ENCODE measurements at regions of chr10 and their contacts with region 1.

Region 1: DNA sequence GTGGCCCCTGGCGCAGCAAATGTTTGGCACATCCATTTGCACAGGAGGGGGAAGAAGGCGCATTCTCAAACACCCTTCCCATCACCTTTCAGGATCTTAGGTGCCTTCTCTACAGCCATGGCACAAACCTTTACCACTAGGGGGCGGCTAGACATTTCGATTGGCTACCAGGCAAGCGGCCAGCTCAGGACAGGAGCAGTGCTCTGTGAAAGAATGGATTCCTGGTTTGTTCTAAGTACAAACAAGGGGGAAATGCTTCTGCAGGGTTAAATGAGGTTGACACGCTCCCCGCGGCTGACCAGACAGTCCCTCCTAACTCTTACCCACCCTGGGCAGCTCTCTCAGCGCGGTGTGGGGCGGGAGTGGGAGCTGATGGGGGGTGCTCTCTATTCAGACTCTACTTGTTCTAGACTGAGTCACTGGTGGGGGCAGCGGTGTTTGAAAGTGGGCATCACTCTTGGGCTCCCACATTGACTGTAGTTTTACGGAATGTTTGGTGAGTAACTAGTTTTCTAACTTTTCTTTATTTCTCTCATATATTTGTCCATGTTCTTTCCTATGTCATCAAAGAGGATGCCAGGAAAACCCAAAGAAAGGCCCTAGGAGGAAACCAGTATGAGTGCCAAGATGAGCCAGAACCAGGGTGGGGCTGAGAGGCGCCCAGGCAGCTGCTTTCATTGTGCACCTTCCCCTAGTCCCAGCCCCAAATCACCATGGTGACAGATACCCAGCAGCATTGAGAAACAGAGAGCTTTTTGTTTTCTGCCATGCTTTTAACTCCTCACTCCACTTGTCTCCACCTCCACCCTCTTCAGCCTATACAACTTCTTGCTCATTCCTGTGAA is 61.4 kb upstream of the GPR158 start:
- DNase-seq: peak; percentile 53 to 94 (median 74)
- ATAC-seq: peak; percentile 92
- H3K4me3 ChIP-seq: no peak overlapping the region
- H3K4me1 ChIP-seq: peaks cover 4% of the 10 kb centered on the region
- CTCF ChIP-seq: peak; percentile 56

Region 2: GRCh38 chr10:23968301-23968700 is 1145.1 kb before region 1 on chr10:
- intact Hi-C with region 1: no loop called
- DNase-seq: no peak
- ATAC-seq: no peak
- H3K4me3 ChIP-seq: no peak overlapping the region
- H3K4me1 ChIP-seq: no peaks in the 10 kb centered on the region
- CTCF ChIP-seq: no peak

Region 3: DNA sequence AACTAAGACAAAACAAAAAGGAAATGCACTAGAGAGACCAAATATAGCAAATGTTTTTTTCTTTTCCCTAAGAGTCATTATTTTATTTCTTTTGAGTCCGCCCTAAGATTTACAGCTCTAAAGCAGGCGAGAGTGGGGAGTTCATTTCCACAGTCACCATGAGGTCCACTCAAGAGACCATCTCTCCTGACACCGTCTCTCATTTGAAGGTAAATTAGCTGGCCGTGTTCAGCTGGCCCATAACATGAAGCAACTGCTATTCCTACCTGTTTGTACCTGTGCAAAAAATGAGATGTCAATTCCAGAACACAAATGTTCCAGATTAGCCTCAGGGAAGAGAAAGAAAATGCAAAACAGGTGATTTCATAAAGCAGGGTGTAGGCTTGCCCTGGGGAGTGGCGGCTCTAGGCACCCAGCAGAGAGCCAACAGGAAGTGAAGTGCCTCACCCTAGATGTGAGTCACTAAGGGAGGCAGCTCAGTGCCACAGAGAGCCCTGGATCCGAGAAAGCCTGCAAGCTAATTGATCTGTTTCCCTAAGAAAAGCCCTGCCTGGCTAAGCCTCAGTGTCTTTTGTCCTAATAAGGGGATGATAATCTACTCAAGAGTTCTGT is 629.8 kb before region 1 on chr10:
- intact Hi-C with region 1: no loop called
- DNase-seq: peak; percentile 78 to 82 (median 79)
- ATAC-seq: peak; percentile 97
- H3K4me3 ChIP-seq: no peak overlapping the region
- H3K4me1 ChIP-seq: peaks cover 25% of the 10 kb centered on the region
- CTCF ChIP-seq: no peak

Region 4: GRCh38 chr10:25226775-25227682 is 113.6 kb after region 1 on chr10:
- intact Hi-C with region 1: loop called in 1 of 2 experiments (anchors 10 kb)
- DNase-seq: peak in 2 of 3 donors; percentile 39 to 40
- ATAC-seq: peak; percentile 63
- H3K4me3 ChIP-seq: no peak overlapping the region
- H3K4me1 ChIP-seq: no peaks in the 10 kb centered on the region
- CTCF ChIP-seq: peak; percentile 15

Measured in mucosa of descending colon (tissue), 3 donors.